Mucosa of descending colon (tissue), 3 donors: ENCODE measurements at regions of chr6 and their contacts with region 1.

Region 1: DNA sequence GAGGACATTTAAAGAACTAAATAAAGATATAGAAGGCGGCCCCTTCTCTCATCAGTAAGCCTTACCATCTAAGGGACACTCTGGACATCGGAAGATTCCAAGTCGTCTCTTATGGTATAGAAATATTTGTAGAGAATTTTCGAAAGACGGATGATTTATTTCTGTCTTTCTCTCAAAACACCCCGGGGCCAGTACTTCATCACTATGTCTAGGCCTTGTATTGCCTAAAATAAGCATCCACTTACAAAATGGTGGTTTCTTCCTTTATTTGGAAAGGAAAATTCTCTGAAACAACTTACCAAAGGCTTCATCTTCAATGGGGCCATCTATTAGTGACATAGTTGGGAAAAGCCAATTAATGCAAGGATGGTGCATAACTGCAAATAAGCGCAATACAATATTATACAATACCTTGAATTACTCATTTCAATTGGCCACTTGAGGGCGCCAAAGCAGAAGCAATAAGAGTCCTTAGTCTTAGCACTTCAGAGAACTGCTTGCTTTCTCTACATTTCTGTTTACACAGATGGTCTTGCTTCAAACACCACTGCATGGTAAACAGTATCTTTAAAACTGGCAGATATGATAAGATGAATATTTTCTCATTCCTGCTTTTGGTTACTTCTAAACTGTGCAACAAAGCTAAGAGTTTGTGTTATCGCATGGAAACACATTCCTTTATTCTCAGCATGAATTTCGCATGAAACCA is 113.2 kb downstream of the VIP start:
- DNase-seq: peak in 1 of 3 donors; percentile 86
- ATAC-seq: peak; percentile 60
- H3K4me3 ChIP-seq: no peak overlapping the region
- H3K4me1 ChIP-seq: no peaks in the 10 kb centered on the region
- CTCF ChIP-seq: peak; percentile 40

Region 2: GRCh38 chr6:152948150-152948768 is 84.5 kb after region 1 on chr6:
- intact Hi-C with region 1: loop called in 1 of 2 experiments (anchors 10 kb)
- DNase-seq: peak in 1 of 3 donors; percentile 5
- ATAC-seq: peak; percentile 43
- H3K4me3 ChIP-seq: no peak overlapping the region
- H3K4me1 ChIP-seq: no peaks in the 10 kb centered on the region
- CTCF ChIP-seq: peak; percentile 19

Region 3: GRCh38 chr6:153023977-153024708 is 160.4 kb after region 1 on chr6:
- intact Hi-C with region 1: loop called (anchors 5 to 10 kb)
- DNase-seq: peak in 2 of 3 donors; percentile 27 to 66
- ATAC-seq: peak; percentile 82
- H3K4me3 ChIP-seq: no peak overlapping the region
- H3K4me1 ChIP-seq: no peaks in the 10 kb centered on the region
- CTCF ChIP-seq: peak; percentile 67